ENCODE measurements at regions of chr14 and their contacts with region 1.

Region 1: GRCh38 chr14:24241829-24242443 is 487 bp downstream of the TINF2 start:
- DNase-seq: peak in 1 of 2 donors; percentile 94
- H3K4me3 ChIP-seq: peak overlapping the region; percentile 81 to 95
- H3K27ac ChIP-seq: peak overlapping the region; percentile 94 to 99
- H3K4me1 ChIP-seq: peaks cover 15 to 32% of the 10 kb centered on the region in 2 donors
- H3K27me3 ChIP-seq: no peaks in the 10 kb centered on the region
- CTCF ChIP-seq: peak; percentile 54 to 67 (median 56)

Region 2: DNA sequence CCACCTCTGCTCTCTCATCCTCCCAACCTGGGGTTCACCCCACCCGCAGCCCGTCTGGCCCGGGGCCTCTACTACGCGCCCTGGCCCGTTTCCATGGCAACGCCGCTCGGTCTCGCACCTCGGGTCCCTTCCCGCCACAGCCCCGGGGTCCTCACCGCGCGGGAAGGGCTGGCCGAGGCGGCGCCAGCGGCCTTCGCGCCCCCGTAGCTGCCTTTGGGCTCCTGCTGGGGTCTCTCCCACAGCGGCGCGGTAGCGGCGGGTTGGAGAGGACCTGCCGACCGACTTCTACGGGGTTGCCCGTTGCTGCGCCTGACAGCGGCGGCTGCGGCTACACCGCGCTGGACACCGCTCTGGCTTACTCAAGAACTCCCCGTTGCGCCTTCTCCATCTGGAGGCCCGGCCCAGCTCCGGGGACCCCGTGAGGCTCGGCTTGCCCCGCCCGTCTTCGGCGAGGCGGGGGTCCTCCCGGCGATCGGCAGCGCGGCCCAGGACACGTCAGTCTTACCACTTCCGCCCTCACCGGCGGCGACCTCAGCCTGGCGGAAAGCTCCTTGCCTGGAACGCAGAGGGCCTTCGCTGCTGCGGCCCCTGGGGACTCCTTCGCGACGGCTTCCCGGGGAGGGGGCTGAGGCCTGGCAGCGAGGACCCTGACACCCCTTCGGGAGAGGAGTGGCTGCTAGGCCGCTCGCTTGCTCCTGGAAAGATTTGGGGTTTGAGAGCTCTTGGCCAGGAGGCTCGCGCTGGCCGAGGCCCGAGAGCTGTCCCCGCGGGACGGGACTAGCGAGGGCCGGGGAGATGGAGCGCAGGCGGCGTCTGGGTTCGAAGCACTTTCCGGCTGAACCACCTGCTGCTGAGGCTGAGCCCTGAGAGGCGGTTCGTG is 46.5 kb before region 1 on chr14 and contains the start of gene TM9SF1:
- intact Hi-C with region 1: loop called (anchors 2 kb)
- DNase-seq: peak; percentile 26 to 94
- H3K4me3 ChIP-seq: peak within 1 kb of the TSS; percentile 81 to 98
- H3K27ac ChIP-seq: peak within 1 kb of the TSS; percentile 97 to 99
- H3K4me1 ChIP-seq: peaks cover 8 to 25% of the 10 kb centered on the region in 2 donors
- H3K27me3 ChIP-seq: no peaks in the 10 kb centered on the region
- CTCF ChIP-seq: no peak
- total RNA-seq, gene TM9SF1: 86.5 TPM

Region 3: DNA sequence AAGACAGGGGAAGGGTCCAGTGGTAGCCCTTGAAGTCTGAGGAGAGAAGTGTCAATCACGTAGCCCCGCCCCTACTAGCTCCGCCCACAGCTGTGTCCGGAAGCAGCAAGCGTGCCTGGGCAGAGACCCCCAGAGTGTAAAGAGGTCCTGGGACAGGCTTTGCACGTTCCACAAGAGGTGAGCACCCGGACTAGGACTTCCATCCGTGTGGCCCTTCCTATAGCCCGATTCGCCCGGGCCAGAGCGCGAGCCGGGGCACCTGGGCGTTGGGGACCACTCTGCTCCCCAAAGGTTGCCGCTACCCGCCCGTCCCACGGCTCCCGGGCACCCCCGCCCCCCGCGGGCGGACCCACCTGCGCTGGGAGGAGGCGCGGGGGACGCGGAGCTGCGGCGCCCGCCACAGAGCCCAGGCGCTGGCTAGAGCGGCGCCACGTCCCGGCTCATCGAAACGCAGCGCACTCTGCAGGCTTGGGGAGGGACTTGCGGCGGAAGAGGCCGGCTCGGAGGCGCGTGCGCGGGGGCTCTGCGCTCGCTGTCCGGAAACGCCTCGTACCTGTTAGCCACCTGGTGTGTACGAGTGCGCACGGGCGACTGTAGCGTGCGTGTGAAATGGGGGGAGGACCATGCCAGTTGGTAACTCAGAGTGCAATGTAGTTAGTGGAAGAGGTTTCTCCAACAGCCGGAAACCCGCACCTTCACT is 29.3 kb after region 1 on chr14 and contains the start of gene RABGGTA:
- intact Hi-C with region 1: loop called (anchors 1 kb)
- DNase-seq: peak; percentile 50 to 89
- H3K4me3 ChIP-seq: peak within 1 kb of the TSS; percentile 74 to 91
- H3K27ac ChIP-seq: peak within 1 kb of the TSS; percentile 92 to 96
- H3K4me1 ChIP-seq: peaks cover 0 to 8% of the 10 kb centered on the region in 2 donors
- H3K27me3 ChIP-seq: no peaks in the 10 kb centered on the region
- CTCF ChIP-seq: peak; percentile 66 to 80 (median 72)
- total RNA-seq, gene RABGGTA: 54.9 TPM

Region 4: DNA sequence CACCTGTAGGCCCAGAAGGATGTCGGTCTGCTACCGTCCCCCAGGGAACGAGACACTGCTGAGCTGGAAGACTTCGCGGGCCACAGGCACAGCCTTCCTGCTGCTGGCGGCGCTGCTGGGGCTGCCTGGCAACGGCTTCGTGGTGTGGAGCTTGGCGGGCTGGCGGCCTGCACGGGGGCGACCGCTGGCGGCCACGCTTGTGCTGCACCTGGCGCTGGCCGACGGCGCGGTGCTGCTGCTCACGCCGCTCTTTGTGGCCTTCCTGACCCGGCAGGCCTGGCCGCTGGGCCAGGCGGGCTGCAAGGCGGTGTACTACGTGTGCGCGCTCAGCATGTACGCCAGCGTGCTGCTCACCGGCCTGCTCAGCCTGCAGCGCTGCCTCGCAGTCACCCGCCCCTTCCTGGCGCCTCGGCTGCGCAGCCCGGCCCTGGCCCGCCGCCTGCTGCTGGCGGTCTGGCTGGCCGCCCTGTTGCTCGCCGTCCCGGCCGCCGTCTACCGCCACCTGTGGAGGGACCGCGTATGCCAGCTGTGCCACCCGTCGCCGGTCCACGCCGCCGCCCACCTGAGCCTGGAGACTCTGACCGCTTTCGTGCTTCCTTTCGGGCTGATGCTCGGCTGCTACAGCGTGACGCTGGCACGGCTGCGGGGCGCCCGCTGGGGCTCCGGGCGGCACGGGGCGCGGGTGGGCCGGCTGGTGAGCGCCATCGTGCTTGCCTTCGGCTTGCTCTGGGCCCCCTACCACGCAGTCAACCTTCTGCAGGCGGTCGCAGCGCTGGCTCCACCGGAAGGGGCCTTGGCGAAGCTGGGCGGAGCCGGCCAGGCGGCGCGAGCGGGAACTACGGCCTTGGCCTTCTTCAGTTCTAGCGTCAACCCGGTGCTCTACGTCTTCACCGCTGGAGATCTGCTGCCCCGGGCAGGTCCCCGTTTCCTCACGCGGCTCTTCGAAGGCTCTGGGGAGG is 69.0 kb after region 1 on chr14 and contains the start of gene LTB4R:
- intact Hi-C with region 1: loop called (anchors 2 kb)
- DNase-seq: peak in 1 of 2 donors; percentile 81
- H3K4me3 ChIP-seq: peak within 1 kb of the TSS; percentile 61 to 68
- H3K27ac ChIP-seq: peak within 1 kb of the TSS; percentile 65 to 68
- H3K4me1 ChIP-seq: peaks cover 8 to 14% of the 10 kb centered on the region in 2 donors
- H3K27me3 ChIP-seq: no peaks in the 10 kb centered on the region
- CTCF ChIP-seq: peak in 2 of 3 experiments; percentile 21 to 52
- total RNA-seq, gene LTB4R: 3.6 TPM

Region 5: DNA sequence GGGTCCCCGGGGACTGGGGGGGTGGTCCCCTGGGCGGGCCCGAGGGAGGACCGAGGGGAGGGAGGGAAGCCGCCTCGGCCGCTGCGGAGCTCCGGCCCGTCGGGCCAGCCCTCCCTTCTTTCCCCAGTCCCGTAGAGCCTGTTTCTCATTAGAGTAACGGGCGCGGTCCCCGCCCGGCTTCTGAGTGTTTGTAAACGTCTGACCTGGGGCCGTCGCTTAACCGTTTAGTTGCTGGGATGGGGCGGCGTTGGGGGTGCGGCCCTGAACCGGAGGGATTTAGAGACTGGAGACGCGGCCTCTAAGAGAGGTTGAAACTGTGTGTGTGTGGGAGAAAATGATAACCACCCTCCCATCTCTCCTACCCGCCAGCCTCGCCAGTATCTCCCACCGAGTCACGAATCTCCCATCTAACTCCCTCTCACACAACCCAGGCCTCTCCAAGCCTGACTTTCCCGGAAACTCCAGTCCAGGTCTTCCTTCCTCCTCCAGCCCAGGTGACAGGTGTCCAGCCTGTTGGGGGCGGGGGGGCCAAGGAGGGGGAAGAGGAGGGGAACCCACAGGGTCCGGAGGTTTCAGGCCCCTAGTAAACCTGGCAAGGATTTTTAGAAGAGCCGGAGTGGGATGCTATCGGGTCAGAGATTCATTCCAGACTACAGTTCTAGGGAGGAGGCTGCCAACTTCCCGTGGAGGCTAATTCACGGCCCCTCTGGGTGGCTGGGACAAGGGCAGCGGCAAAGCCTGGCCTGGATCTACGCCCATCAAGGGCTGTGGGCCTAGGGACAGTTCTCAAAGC is 125.0 kb after region 1 on chr14:
- intact Hi-C with region 1: loop called (anchors 1 kb)
- DNase-seq: peak; percentile 65 to 96
- H3K4me3 ChIP-seq: peak overlapping the region; percentile 67 to 78
- H3K27ac ChIP-seq: peak overlapping the region; percentile 96 to 99
- H3K4me1 ChIP-seq: peaks cover 6 to 18% of the 10 kb centered on the region in 2 donors
- H3K27me3 ChIP-seq: no peaks in the 10 kb centered on the region
- CTCF ChIP-seq: no peak